ENCODE measurements at regions of chr2 and their contacts with region 1.

Region 1: GRCh38 chr2:143110758-143111428 is 18.3 kb upstream of the ARHGAP15 start:
- DNase-seq: peak; percentile 18 to 70 (median 61)
- ATAC-seq: peak; percentile 90
- H3K4me3 ChIP-seq: no peak overlapping the region
- H3K4me3 Mint-ChIP-seq: peak overlapping the region in 4 of 10 donors; percentile 10 to 69 (median 60)
- H3K27ac ChIP-seq: no peak overlapping the region
- H3K27ac Mint-ChIP-seq: peak overlapping the region in 7 of 9 donors; percentile 17 to 83 (median 71)
- H3K4me1 ChIP-seq: peaks cover 0 to 20% of the 10 kb centered on the region in 2 donors
- H3K4me1 Mint-ChIP-seq: peaks cover 9 to 45% (median 38%) of the 10 kb centered on the region in 7 donors
- H3K27me3 ChIP-seq: no peaks in the 10 kb centered on the region
- H3K27me3 Mint-ChIP-seq: peaks cover 0 to 7% (median 6%) of the 10 kb centered on the region in 5 donors

Region 2: DNA sequence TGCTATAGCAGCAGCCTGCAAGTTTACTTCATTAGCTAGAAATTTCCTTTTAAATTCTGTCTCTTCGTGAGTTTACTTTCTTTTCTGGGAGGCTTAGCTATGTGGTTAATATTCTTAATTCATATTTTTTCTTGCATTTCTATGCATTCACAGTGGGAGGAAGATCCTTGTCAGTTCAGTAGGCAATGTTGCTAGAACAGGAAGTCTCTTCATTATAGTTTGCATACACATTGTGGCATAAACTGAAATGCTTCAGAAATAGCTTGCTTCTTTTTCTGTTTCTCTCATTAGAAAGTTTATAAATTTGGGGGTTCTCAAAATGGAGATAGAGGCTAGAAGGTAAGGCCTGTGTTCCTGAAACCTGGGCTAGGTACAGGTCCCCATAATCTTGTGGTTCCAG is 10.2 kb after region 1 on chr2:
- CTCF ChIA-PET with region 1: interaction called, 18 read pairs
- POLR2A ChIA-PET with region 1: interaction called, 18 read pairs
- intact Hi-C with region 1: no loop called
- DNase-seq: no peak
- ATAC-seq: no peak
- H3K4me3 ChIP-seq: no peak overlapping the region
- H3K4me3 Mint-ChIP-seq: peak overlapping the region in 4 of 10 donors; percentile 2 to 69 (median 34)
- H3K27ac ChIP-seq: no peak overlapping the region
- H3K27ac Mint-ChIP-seq: peak overlapping the region in 5 of 9 donors; percentile 33 to 78 (median 49)
- H3K4me1 ChIP-seq: peaks cover 17 to 40% of the 10 kb centered on the region in 2 donors
- H3K4me1 Mint-ChIP-seq: peaks cover 4 to 33% (median 15%) of the 10 kb centered on the region in 7 donors
- H3K27me3 ChIP-seq: no peaks in the 10 kb centered on the region
- H3K27me3 Mint-ChIP-seq: peaks cover 0 to 3% (median 0%) of the 10 kb centered on the region in 5 donors

Region 3: DNA sequence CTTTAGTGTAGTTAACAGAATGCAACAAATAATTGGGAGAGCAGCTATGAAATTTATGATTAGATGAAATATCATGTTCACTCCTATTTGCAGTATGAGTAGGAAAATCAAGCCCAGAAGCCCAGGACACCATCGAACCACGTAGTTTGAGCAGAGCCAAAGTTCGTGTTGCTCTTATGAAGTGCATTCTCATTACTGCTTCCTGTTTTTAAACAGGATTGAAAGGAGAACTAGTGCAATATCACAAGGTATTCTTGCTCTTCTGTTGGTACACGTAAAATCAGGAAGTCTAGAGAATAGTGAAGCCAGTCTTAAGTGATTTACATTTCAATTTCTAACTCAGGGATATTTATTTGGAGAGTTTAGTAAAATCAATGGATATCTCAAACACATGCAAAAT is 39.4 kb after region 1 on chr2:
- CTCF ChIA-PET with region 1: interaction called, 10 read pairs
- POLR2A ChIA-PET with region 1: interaction called, 3 read pairs
- intact Hi-C with region 1: loop called in 1 of 2 experiments (anchors 2 kb)
- DNase-seq: peak in 2 of 9 donors; percentile 25 to 33
- ATAC-seq: peak; percentile 80
- H3K4me3 ChIP-seq: peak overlapping the region; percentile 17
- H3K4me3 Mint-ChIP-seq: peak overlapping the region; percentile 38 to 79 (median 70)
- H3K27ac ChIP-seq: peak overlapping the region; percentile 63
- H3K27ac Mint-ChIP-seq: peak overlapping the region; percentile 56 to 96 (median 84)
- H3K4me1 ChIP-seq: peaks cover 61 to 65% of the 10 kb centered on the region in 2 donors
- H3K4me1 Mint-ChIP-seq: peaks cover 68 to 100% (median 91%) of the 10 kb centered on the region in 7 donors
- H3K27me3 ChIP-seq: no peaks in the 10 kb centered on the region
- H3K27me3 Mint-ChIP-seq: no peaks in the 10 kb centered on the region

Region 4: GRCh38 chr2:143155661-143156060 is 44.8 kb after region 1 on chr2:
- CTCF ChIA-PET with region 1: interaction called, 53 read pairs
- POLR2A ChIA-PET with region 1: interaction called, 7 read pairs
- intact Hi-C with region 1: loop called in 1 of 2 experiments (anchors 2 kb)
- DNase-seq: no peak
- ATAC-seq: no peak
- H3K4me3 ChIP-seq: no peak overlapping the region
- H3K4me3 Mint-ChIP-seq: peak overlapping the region in 3 of 10 donors; percentile 43 to 71 (median 50)
- H3K27ac ChIP-seq: no peak overlapping the region
- H3K27ac Mint-ChIP-seq: peak overlapping the region in 7 of 9 donors; percentile 33 to 90 (median 79)
- H3K4me1 ChIP-seq: peaks cover 29 to 60% of the 10 kb centered on the region in 2 donors
- H3K4me1 Mint-ChIP-seq: peaks cover 59 to 100% (median 91%) of the 10 kb centered on the region in 7 donors
- H3K27me3 ChIP-seq: no peaks in the 10 kb centered on the region
- H3K27me3 Mint-ChIP-seq: no peaks in the 10 kb centered on the region

Region 5: GRCh38 chr2:143217512-143218115 is 106.7 kb after region 1 on chr2:
- CTCF ChIA-PET with region 1: interaction called, 46 read pairs
- POLR2A ChIA-PET with region 1: interaction called, 6 read pairs
- intact Hi-C with region 1: loop called (anchors 1 kb)
- DNase-seq: no peak
- ATAC-seq: peak; percentile 75
- H3K4me3 ChIP-seq: no peak overlapping the region
- H3K4me3 Mint-ChIP-seq: peak overlapping the region in 3 of 10 donors; percentile 10 to 31 (median 25)
- H3K27ac ChIP-seq: no peak overlapping the region
- H3K27ac Mint-ChIP-seq: peak overlapping the region; percentile 17 to 85 (median 53)
- H3K4me1 ChIP-seq: peaks cover 4 to 5% of the 10 kb centered on the region in 2 donors
- H3K4me1 Mint-ChIP-seq: peaks cover 29 to 81% (median 67%) of the 10 kb centered on the region in 7 donors
- H3K27me3 ChIP-seq: no peaks in the 10 kb centered on the region
- H3K27me3 Mint-ChIP-seq: no peaks in the 10 kb centered on the region

Region 6: DNA sequence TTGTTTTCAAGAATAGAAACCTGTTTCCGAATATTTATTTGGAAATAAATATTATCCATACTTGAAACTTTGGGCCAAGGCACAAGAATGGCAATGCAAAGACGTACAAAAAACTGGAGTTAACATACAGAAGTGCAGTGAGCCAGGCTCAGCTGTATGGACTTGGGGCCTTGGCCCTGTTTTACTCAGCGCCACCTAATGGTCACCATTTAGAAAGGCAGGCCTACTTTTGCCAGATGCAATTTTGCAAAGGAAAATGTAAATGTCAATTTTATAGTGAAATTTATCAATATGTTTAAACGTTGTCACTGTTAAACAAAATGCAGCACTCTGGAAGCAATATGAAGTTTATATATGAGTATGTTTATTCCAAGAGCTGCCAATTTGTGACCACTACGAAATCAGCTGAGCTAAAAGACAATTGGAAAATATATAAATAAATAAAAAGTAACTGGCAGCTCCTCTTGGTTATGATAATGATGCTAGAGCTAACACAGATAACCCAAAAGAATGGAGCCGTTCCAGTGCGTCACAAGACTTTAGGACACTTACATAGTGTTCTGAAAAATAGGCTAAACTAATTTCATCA is 173.3 kb after region 1 on chr2:
- CTCF ChIA-PET with region 1: interaction called, 7 read pairs
- POLR2A ChIA-PET with region 1: no interaction called
- intact Hi-C with region 1: loop called (anchors 1 kb)
- DNase-seq: peak in 6 of 9 donors; percentile 6 to 37 (median 26)
- ATAC-seq: peak; percentile 84
- H3K4me3 ChIP-seq: no peak overlapping the region
- H3K4me3 Mint-ChIP-seq: no peak overlapping the region
- H3K27ac ChIP-seq: no peak overlapping the region
- H3K27ac Mint-ChIP-seq: peak overlapping the region in 4 of 9 donors; percentile 13 to 67 (median 42)
- H3K4me1 ChIP-seq: no peaks in the 10 kb centered on the region
- H3K4me1 Mint-ChIP-seq: peaks cover 16 to 70% (median 49%) of the 10 kb centered on the region in 7 donors
- H3K27me3 ChIP-seq: no peaks in the 10 kb centered on the region
- H3K27me3 Mint-ChIP-seq: no peaks in the 10 kb centered on the region